ENCODE measurements at regions of chr3 and their contacts with region 1.

Region 1: DNA sequence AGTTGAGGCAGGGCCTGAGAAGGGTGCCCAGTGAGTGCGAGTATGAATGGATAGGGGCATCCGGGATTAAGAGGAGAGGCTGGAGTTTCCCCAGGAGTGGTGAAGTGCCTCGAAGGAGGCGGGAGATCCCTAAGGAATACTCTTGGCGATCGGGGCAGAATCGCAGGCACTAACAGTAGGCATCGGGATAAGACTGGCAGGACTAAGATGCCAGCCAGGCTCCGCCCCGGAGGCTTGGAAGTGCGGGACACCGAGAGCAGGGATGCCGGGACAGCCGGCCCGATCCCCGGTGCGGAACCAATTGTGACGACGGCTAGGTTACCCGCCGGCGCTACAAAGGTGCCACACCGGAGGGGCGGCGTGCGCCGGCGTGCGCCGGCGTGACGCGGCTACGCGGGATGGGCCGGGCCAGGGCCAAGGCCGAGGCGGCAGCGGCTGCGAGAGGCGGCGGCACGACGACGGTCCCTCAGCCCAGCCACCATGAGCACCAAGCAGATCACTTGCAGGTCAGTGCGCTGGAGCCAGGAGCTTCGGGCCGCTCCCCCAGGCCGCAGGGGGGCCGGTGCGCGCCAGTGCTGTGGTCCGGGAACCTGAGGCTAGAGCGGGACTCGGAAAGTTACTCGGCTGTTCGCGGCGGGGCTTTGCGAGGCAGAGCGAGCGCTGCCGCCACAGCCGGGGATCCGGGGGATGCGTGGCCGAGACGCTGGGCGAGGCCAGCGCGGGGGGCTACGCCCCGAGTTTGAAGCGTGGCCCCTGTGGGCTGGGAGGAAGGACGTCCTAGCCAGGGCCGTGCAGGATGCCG is at the start of gene MKRN2:
- DNase-seq: peak; percentile 80 to 92 (median 86)
- H3K4me3 ChIP-seq: peak within 1 kb of the TSS; percentile 95
- H3K27ac ChIP-seq: peak within 1 kb of the TSS; percentile 78 to 88
- H3K4me1 ChIP-seq: peaks cover 7% of the 10 kb centered on the region
- H3K27me3 ChIP-seq: no peaks in the 10 kb centered on the region
- CTCF ChIP-seq: peak in 1 of 3 donors; percentile 17
- EP300 ChIP-seq: no peak
- POLR2A ChIP-seq: peak; percentile 96
- total RNA-seq, gene MKRN2: 23.8 to 42.3 (median 28.8) TPM

Region 2: GRCh38 chr3:12405432-12406272 is 151.2 kb before region 1 on chr3:
- intact Hi-C with region 1: no loop called
- DNase-seq: peak; percentile 56 to 64 (median 63)
- H3K4me3 ChIP-seq: no peak overlapping the region
- H3K27ac ChIP-seq: no peak overlapping the region
- H3K4me1 ChIP-seq: no peaks in the 10 kb centered on the region
- H3K27me3 ChIP-seq: no peaks in the 10 kb centered on the region
- CTCF ChIP-seq: no peak
- EP300 ChIP-seq: no peak
- POLR2A ChIP-seq: no peak

Region 3: GRCh38 chr3:12663936-12664908 is 107.3 kb after region 1 on chr3 and contains the start of gene RAF1:
- intact Hi-C with region 1: loop called in 1 of 4 experiments (anchors 5 kb)
- DNase-seq: peak; percentile 98 to 99 (median 98)
- H3K4me3 ChIP-seq: peak within 1 kb of the TSS; percentile 96
- H3K27ac ChIP-seq: peak within 1 kb of the TSS; percentile 99 to 100
- H3K4me1 ChIP-seq: peaks cover 11% of the 10 kb centered on the region
- H3K27me3 ChIP-seq: no peaks in the 10 kb centered on the region
- CTCF ChIP-seq: no peak
- EP300 ChIP-seq: no peak
- POLR2A ChIP-seq: peak; percentile 88
- total RNA-seq, gene RAF1: 75.0 to 106 (median 78.8) TPM

Region 4: GRCh38 chr3:12782172-12782815 is 225.4 kb after region 1 on chr3:
- intact Hi-C with region 1: no loop called
- DNase-seq: no peak
- H3K4me3 ChIP-seq: no peak overlapping the region
- H3K27ac ChIP-seq: no peak overlapping the region
- H3K4me1 ChIP-seq: no peaks in the 10 kb centered on the region
- H3K27me3 ChIP-seq: no peaks in the 10 kb centered on the region
- CTCF ChIP-seq: no peak
- EP300 ChIP-seq: no peak
- POLR2A ChIP-seq: no peak

Measured in ovary (tissue), 10 donors.